ENCODE measurements at regions of chr2 and their contacts with region 1.

Region 1: DNA sequence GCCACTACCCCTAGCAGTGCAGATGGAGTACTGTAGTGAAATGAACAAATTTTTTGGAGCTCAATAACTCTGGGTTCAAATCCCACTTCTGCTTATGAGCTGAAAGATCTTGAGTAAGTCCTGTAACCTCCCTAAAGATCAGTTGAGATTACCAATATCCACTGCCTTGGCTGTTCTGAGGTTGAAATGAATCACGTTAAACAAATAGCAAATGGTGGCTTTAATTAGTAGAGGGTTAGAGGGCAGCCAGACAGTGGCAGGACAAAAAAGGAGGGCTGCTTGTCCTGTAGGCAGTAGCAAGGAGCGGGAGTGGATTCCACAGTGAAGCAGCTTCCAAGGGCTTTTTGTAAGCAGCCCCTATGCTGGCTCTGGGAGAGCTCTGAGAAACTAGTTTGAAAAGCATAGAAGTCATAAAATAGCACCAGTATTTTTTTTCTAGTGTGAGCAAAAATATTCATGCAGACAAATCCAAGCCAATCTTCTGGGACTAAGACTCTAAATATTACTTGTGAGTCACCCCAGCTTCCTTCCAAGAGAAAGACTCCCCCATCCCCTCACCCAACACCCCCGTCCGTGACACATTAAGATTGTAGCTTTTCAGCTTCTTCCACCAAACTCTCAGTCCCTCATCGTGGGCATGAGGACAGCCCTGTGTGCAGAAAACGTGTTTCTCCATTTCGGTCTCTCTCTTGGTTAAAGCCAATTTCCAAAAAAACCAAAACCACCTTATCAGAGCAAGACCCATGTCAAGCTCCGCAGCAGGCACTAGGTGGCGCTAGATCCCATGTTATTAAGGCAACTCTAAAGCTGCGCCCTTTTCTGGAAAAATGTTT is 123.5 kb upstream of the LGALSL start:
- DNase-seq: peak; percentile 80
- H3K4me3 Mint-ChIP-seq: no peak overlapping the region
- H3K27ac Mint-ChIP-seq: no peak overlapping the region
- H3K4me1 Mint-ChIP-seq: peaks cover 52% of the 10 kb centered on the region
- H3K27me3 Mint-ChIP-seq: peaks cover 5% of the 10 kb centered on the region

Region 2: DNA sequence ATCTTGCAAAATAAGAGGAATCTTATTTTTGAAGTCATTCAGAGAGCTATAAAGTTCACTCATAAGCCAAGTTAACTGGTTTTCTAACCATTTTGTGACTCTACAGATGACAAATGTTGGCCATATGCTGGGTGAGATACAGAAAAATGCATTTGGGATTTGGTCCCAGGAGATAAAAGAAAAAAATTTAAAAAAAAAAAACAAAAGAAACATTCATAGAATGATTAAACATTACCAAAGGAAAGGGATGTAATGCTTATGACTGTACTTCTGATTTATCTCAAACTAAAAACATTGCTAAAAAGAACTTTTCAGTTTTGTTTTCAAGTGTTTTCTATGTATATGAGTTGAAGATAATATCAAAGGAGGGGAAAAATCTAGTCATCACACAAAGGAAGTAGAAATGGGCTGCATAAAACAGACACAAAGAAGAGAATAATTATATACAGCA is 229.3 kb before region 1 on chr2:
- CTCF ChIA-PET with region 1: interaction called, 7 read pairs
- POLR2A ChIA-PET with region 1: interaction called, 12 read pairs
- DNase-seq: no peak
- H3K4me3 Mint-ChIP-seq: no peak overlapping the region
- H3K27ac Mint-ChIP-seq: peak overlapping the region; percentile 70
- H3K4me1 Mint-ChIP-seq: peaks cover 38% of the 10 kb centered on the region
- H3K27me3 Mint-ChIP-seq: no peaks in the 10 kb centered on the region

Region 3: GRCh38 chr2:64179582-64180321 is 150.7 kb before region 1 on chr2:
- CTCF ChIA-PET with region 1: no interaction called
- POLR2A ChIA-PET with region 1: no interaction called
- DNase-seq: no peak
- H3K4me3 Mint-ChIP-seq: no peak overlapping the region
- H3K27ac Mint-ChIP-seq: peak overlapping the region; percentile 9
- H3K4me1 Mint-ChIP-seq: peaks cover 12% of the 10 kb centered on the region
- H3K27me3 Mint-ChIP-seq: peaks cover 4% of the 10 kb centered on the region

Region 4: GRCh38 chr2:64311948-64312621 is 18.4 kb before region 1 on chr2:
- CTCF ChIA-PET with region 1: interaction called, 15 read pairs
- POLR2A ChIA-PET with region 1: interaction called, 3 read pairs
- DNase-seq: no peak
- H3K4me3 Mint-ChIP-seq: no peak overlapping the region
- H3K27ac Mint-ChIP-seq: no peak overlapping the region
- H3K4me1 Mint-ChIP-seq: no peaks in the 10 kb centered on the region
- H3K27me3 Mint-ChIP-seq: peaks cover 14% of the 10 kb centered on the region

Region 5: GRCh38 chr2:64493788-64494187 is 163.3 kb after region 1 on chr2:
- CTCF ChIA-PET with region 1: interaction called, 243 read pairs
- POLR2A ChIA-PET with region 1: interaction called, 15 read pairs
- DNase-seq: no peak
- H3K4me3 Mint-ChIP-seq: no peak overlapping the region
- H3K27ac Mint-ChIP-seq: no peak overlapping the region
- H3K4me1 Mint-ChIP-seq: peaks cover 21% of the 10 kb centered on the region
- H3K27me3 Mint-ChIP-seq: peaks cover 28% of the 10 kb centered on the region

Region 6: DNA sequence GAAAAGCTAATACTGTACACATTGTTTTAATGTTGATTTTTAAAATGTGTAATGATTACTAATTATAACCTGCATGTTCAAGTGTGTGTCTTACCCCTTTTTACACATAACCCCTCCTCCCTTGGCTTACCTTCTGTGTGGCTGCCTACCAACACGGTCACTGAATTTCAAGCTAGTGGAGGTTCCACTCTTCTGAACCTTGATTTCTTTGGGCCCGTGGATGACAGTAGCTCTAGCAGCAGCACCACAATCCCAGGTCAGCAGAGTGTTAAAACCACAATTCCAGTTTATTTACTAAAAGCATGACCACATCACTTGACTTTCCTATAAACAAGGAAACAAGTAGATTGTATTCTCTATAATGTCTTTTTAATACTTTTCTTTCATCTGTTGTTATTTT is 250.5 kb after region 1 on chr2:
- CTCF ChIA-PET with region 1: no interaction called
- POLR2A ChIA-PET with region 1: no interaction called
- DNase-seq: no peak
- H3K4me3 Mint-ChIP-seq: no peak overlapping the region
- H3K27ac Mint-ChIP-seq: no peak overlapping the region
- H3K4me1 Mint-ChIP-seq: peaks cover 6% of the 10 kb centered on the region
- H3K27me3 Mint-ChIP-seq: no peaks in the 10 kb centered on the region

Region 7: DNA sequence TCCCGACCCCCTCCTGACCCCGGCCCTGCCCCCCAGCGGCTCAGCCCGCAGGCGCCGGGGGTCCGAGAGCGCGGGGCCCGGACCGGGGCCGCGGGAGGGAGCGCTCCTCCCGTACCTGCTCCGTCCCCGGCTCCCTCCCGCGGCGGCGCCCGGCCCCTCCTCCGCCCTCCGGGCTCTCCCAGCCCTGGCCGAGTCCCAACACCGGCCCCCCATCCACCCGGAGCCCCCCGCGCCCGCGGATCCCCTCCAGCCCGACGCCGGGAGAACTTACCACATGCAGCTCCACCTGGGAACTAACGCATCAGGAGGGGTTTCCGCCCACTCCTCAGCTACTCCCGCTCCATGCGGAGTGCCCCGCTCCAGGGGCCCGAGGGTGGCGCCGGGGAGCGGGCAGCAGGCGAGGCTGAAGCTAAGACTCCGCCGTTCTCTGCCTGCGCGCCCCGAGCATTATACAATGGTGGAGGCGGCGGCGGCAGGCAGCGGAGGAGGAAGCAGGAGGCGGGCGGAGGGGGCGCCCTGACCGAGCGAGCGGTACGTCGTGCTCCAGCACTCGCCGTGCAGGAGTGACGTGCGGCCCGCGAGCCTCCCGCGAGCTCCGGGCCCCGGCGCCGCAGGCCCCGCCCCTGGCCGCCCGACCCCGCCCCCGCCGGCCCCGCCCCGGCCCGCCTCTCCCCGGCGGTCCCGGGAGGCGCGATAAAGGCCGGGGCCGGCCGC is 323.0 kb after region 1 on chr2 and contains the start of gene SERTAD2:
- CTCF ChIA-PET with region 1: interaction called, 15 read pairs
- POLR2A ChIA-PET with region 1: interaction called, 3 read pairs
- DNase-seq: peak; percentile 87
- H3K4me3 Mint-ChIP-seq: peak within 1 kb of the TSS; percentile 91
- H3K27ac Mint-ChIP-seq: peak within 1 kb of the TSS; percentile 86
- H3K4me1 Mint-ChIP-seq: peaks cover 48% of the 10 kb centered on the region
- H3K27me3 Mint-ChIP-seq: peaks cover 11% of the 10 kb centered on the region
- total RNA-seq, gene SERTAD2: 16.2 to 17.5 TPM